ENCODE measurements at regions of chrX and their contacts with region 1.

Region 1: DNA sequence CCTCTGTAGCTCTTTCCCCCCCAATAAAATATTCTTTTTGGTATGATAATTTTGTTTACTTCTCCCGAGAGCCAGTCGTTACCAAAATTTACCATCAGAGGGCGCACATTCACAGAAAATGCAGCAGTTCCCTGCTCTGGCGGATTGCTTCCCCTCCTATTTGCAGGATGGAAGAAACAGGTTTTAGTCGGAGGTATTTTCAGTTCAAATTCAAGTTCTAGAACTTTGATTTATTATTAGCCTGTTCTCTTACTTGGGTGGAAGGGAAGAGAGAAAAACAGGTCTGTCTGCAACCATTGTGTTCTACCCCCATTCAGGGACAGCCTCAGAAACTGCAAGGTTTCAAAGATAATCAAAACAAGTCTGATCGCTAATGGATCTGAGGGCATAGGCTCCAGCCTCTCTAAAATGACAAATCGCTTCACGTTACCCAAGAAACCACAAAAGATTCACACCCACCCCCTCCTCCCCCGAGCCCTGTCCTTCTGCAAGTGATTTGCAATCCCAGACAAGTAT is 263.8 kb upstream of the RPS6KA3 start:
- DNase-seq: peak; percentile 42 to 60
- H3K4me3 ChIP-seq: no peak overlapping the region
- H3K4me3 Mint-ChIP-seq: no peak overlapping the region
- H3K27ac Mint-ChIP-seq: no peak overlapping the region
- H3K4me1 ChIP-seq: peaks cover 18% of the 10 kb centered on the region
- H3K4me1 Mint-ChIP-seq: peaks cover 25% of the 10 kb centered on the region
- H3K27me3 ChIP-seq: no peaks in the 10 kb centered on the region
- H3K27me3 Mint-ChIP-seq: no peaks in the 10 kb centered on the region
- CTCF ChIP-seq: peak; percentile 51 to 52

Region 2: DNA sequence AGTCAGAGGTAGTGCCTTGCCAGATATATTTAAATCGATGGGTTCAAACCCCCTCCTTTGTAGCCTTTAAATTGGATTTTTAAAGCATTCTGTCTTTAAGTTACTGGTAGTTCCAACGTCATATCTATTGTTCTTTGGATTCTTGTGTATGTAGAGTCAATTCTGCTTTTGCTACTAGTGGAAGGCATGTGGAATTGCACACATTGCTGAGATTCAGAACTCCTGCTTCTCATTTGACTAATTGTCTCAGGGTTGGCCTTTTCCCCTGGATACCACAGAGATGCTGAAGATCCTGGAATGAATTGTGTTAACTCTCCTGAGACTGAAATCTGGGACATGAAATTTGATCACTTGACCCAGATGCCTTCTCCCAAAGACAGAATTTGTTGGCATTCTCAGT is 64.5 kb after region 1 on chrX:
- CTCF ChIA-PET with region 1: no interaction called
- POLR2A ChIA-PET with region 1: no interaction called
- intact Hi-C with region 1: loop called (anchors 2 kb)
- DNase-seq: no peak
- H3K4me3 ChIP-seq: no peak overlapping the region
- H3K4me3 Mint-ChIP-seq: no peak overlapping the region
- H3K27ac Mint-ChIP-seq: no peak overlapping the region
- H3K4me1 ChIP-seq: peaks cover 20% of the 10 kb centered on the region
- H3K4me1 Mint-ChIP-seq: peaks cover 6% of the 10 kb centered on the region
- H3K27me3 ChIP-seq: no peaks in the 10 kb centered on the region
- H3K27me3 Mint-ChIP-seq: no peaks in the 10 kb centered on the region
- CTCF ChIP-seq: peak in 1 of 2 experiments; percentile 8

Region 3: GRCh38 chrX:20740443-20740842 is 210.0 kb after region 1 on chrX:
- CTCF ChIA-PET with region 1: no interaction called
- POLR2A ChIA-PET with region 1: no interaction called
- intact Hi-C with region 1: loop called (anchors 1 kb)
- DNase-seq: no peak
- H3K4me3 ChIP-seq: no peak overlapping the region
- H3K4me3 Mint-ChIP-seq: no peak overlapping the region
- H3K27ac Mint-ChIP-seq: no peak overlapping the region
- H3K4me1 ChIP-seq: no peaks in the 10 kb centered on the region
- H3K4me1 Mint-ChIP-seq: no peaks in the 10 kb centered on the region
- H3K27me3 ChIP-seq: no peaks in the 10 kb centered on the region
- H3K27me3 Mint-ChIP-seq: no peaks in the 10 kb centered on the region
- CTCF ChIP-seq: no peak

Region 4: DNA sequence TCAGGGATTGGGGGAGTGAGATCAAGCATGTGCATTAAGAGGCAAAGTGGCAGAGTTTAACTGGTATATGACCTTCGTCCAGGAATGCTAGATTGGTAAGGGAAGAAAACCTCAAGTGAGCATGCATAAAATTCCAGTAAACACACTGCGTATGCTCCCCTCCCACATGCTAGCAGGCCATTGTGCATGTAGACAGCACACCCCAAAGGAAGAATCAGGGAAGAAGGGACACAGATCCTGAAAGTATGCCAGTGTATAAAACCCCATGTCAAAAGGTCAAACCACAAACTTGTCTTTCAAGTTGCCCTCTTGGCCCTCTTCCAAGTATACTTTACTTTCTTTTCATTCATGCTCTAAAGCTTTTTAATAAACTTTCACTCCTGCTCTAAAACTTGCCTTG is 438.5 kb after region 1 on chrX:
- CTCF ChIA-PET with region 1: no interaction called
- POLR2A ChIA-PET with region 1: no interaction called
- intact Hi-C with region 1: loop called (anchors 5 kb)
- DNase-seq: no peak
- H3K4me3 ChIP-seq: no peak overlapping the region
- H3K4me3 Mint-ChIP-seq: no peak overlapping the region
- H3K27ac Mint-ChIP-seq: no peak overlapping the region
- H3K4me1 ChIP-seq: peaks cover 15% of the 10 kb centered on the region
- H3K4me1 Mint-ChIP-seq: peaks cover 6% of the 10 kb centered on the region
- H3K27me3 ChIP-seq: no peaks in the 10 kb centered on the region
- H3K27me3 Mint-ChIP-seq: no peaks in the 10 kb centered on the region
- CTCF ChIP-seq: no peak

Region 5: GRCh38 chrX:21479695-21480270 is 949.3 kb after region 1 on chrX:
- CTCF ChIA-PET with region 1: interaction called, 10 read pairs
- POLR2A ChIA-PET with region 1: no interaction called
- intact Hi-C with region 1: loop called (anchors 1 kb)
- DNase-seq: peak in 1 of 2 experiments; percentile 50
- H3K4me3 ChIP-seq: no peak overlapping the region
- H3K4me3 Mint-ChIP-seq: no peak overlapping the region
- H3K27ac Mint-ChIP-seq: no peak overlapping the region
- H3K4me1 ChIP-seq: 0 out of 2 replicates have a peak, but pooled peaks cover 3% of the 10 kb centered on the region
- H3K4me1 Mint-ChIP-seq: no peaks in the 10 kb centered on the region
- H3K27me3 ChIP-seq: no peaks in the 10 kb centered on the region
- H3K27me3 Mint-ChIP-seq: no peaks in the 10 kb centered on the region
- CTCF ChIP-seq: peak; percentile 26 to 63

Region 6: GRCh38 chrX:21725496-21725895 is 1195.0 kb after region 1 on chrX:
- CTCF ChIA-PET with region 1: interaction called, 3 read pairs
- POLR2A ChIA-PET with region 1: no interaction called
- intact Hi-C with region 1: loop called (anchors 1 kb)
- DNase-seq: peak; percentile 37 to 44
- H3K4me3 ChIP-seq: no peak overlapping the region
- H3K4me3 Mint-ChIP-seq: no peak overlapping the region
- H3K27ac Mint-ChIP-seq: no peak overlapping the region
- H3K4me1 ChIP-seq: peaks cover 26% of the 10 kb centered on the region
- H3K4me1 Mint-ChIP-seq: no peaks in the 10 kb centered on the region
- H3K27me3 ChIP-seq: no peaks in the 10 kb centered on the region
- H3K27me3 Mint-ChIP-seq: no peaks in the 10 kb centered on the region
- CTCF ChIP-seq: peak; percentile 46 to 52

Region 7: DNA sequence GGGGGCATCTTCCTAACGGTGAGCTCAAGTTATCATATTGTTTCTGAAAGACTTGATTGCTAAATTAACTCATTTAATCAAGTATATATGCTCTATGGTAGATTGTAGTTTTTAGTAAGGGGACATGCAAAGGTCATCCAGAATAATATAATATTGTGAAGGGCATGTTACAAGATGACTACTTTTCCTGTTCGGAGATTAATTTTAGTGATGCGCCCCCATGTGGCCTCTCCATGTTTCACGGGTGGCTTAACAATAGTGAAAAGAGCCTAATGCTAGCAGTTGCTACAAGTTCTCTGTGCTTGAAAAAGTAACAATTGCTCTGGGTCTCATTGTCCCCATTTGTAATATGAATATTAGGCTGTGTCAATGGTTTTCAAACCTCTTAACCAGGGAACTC is 1215.3 kb after region 1 on chrX:
- CTCF ChIA-PET with region 1: no interaction called
- POLR2A ChIA-PET with region 1: no interaction called
- intact Hi-C with region 1: loop called (anchors 5 kb)
- DNase-seq: peak in 1 of 2 experiments; percentile 41
- H3K4me3 ChIP-seq: no peak overlapping the region
- H3K4me3 Mint-ChIP-seq: no peak overlapping the region
- H3K27ac Mint-ChIP-seq: no peak overlapping the region
- H3K4me1 ChIP-seq: peaks cover 44% of the 10 kb centered on the region
- H3K4me1 Mint-ChIP-seq: peaks cover 8% of the 10 kb centered on the region
- H3K27me3 ChIP-seq: no peaks in the 10 kb centered on the region
- H3K27me3 Mint-ChIP-seq: no peaks in the 10 kb centered on the region
- CTCF ChIP-seq: peak in 1 of 2 experiments; percentile 28

Measured in Caco-2 (cell line).